SK-N-SH (cell line): ENCODE measurements at regions of chr16 and their contacts with region 1.

Region 1: DNA sequence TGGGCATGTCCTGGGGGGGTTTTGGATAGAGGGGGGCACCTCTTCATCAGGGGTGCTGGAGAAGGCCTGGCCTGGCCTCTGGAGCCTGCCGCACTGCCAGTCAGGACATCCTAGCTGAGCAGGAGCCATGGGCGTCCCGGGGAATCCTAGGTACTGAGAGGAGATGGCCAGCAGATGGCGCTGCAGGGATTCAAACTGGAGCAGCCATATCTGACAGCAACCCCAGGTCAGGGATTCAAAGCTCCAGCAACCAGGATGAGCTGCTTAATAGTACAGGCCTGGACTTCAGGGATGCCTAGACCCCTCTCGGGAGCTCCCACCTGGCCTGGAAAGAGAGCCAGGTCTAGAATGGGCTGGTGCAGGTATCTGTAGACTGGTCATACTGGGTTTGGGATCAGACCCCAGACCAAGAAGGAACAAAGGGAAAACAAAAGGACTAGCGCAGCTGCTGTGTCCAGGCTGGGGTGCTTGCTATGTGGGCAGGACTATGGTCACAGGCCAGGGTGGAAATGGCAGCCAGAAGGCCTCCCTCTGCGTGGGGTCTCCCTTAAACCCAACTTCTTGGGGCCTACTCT is 306.9 kb upstream of the RBFOX1 start:
- DNase-seq: peak; percentile 79
- H3K4me3 ChIP-seq: no peak overlapping the region
- H3K27ac ChIP-seq: no peak overlapping the region
- H3K4me1 ChIP-seq: no peaks in the 10 kb centered on the region
- H3K27me3 ChIP-seq: no peaks in the 10 kb centered on the region
- CTCF ChIP-seq: peak; percentile 41
- EP300 ChIP-seq: no peak
- RAD21 ChIP-seq: peak; percentile 70

Region 2: GRCh38 chr16:6714510-6714909 is 311.2 kb before region 1 on chr16:
- CTCF ChIA-PET with region 1: no interaction called
- POLR2A ChIA-PET with region 1: no interaction called
- DNase-seq: no peak
- H3K4me3 ChIP-seq: no peak overlapping the region
- H3K27ac ChIP-seq: no peak overlapping the region
- H3K4me1 ChIP-seq: no peaks in the 10 kb centered on the region
- H3K27me3 ChIP-seq: no peaks in the 10 kb centered on the region
- CTCF ChIP-seq: no peak
- EP300 ChIP-seq: no peak
- RAD21 ChIP-seq: no peak

Region 3: GRCh38 chr16:7037495-7037894 is 11.8 kb after region 1 on chr16:
- CTCF ChIA-PET with region 1: interaction called, 14 read pairs
- POLR2A ChIA-PET with region 1: no interaction called
- DNase-seq: no peak
- H3K4me3 ChIP-seq: no peak overlapping the region
- H3K27ac ChIP-seq: no peak overlapping the region
- H3K4me1 ChIP-seq: no peaks in the 10 kb centered on the region
- H3K27me3 ChIP-seq: no peaks in the 10 kb centered on the region
- CTCF ChIP-seq: no peak
- EP300 ChIP-seq: no peak
- RAD21 ChIP-seq: no peak

Region 4: DNA sequence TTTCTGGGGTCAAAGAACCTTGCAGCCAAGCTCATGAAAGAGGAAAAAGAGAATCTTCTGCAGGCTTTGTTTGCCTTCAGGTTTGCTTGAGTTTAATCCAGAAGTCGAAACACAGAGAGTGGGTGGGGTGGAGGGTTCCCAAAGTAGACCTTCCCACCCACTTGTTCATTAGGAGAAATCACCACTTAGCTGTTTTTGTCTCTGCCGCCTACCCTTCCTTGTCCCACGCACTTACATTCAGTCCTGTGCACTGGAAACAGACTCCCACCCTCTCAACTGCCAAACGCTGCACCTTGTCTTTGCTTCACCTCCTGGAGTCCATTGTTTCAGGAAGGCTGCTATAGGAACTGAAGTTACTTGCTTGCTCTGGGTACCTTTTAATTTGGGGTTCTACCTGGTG is 268.3 kb after region 1 on chr16:
- CTCF ChIA-PET with region 1: no interaction called
- POLR2A ChIA-PET with region 1: no interaction called
- DNase-seq: no peak
- H3K4me3 ChIP-seq: no peak overlapping the region
- H3K27ac ChIP-seq: no peak overlapping the region
- H3K4me1 ChIP-seq: no peaks in the 10 kb centered on the region
- H3K27me3 ChIP-seq: no peaks in the 10 kb centered on the region
- CTCF ChIP-seq: no peak
- EP300 ChIP-seq: no peak
- RAD21 ChIP-seq: no peak

Region 5: DNA sequence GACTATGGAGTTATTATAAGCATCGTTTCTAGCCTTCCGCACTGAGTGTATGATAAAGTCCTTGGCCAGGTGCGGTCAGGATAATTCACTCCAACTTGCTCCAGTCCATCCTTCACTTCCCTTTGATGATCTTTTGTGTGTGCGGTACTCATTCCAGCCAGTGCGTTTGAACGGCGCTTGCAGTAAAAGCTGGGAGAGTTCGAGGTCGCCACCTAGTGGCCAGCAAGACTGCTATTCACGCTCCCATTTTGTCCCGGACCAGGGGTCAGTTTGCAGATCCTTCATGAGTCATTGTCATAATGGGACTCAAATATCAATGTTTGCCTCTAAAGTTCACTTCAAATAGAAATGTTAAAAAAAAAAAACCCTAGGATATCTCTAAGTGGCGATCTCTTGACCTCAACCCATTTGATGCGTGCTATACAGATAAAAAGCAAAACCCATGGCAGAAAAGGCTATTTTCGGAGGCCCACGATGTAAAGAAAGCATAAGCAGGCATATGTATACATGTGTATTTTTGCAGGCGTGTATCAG is 1147.5 kb after region 1 on chr16:
- CTCF ChIA-PET with region 1: interaction called, 11 read pairs
- POLR2A ChIA-PET with region 1: no interaction called
- DNase-seq: peak; percentile 67
- H3K4me3 ChIP-seq: no peak overlapping the region
- H3K27ac ChIP-seq: no peak overlapping the region
- H3K4me1 ChIP-seq: no peaks in the 10 kb centered on the region
- H3K27me3 ChIP-seq: no peaks in the 10 kb centered on the region
- CTCF ChIP-seq: peak; percentile 66
- EP300 ChIP-seq: no peak
- RAD21 ChIP-seq: peak; percentile 80